ENCODE measurements at regions of chr17 and their contacts with region 1.

Region 1: GRCh38 chr17:66541461-66542128 is 239.2 kb downstream of the PRKCA start:
- DNase-seq: peak in 1 of 2 donors; percentile 26
- ATAC-seq: peak in 4 of 8 donors; percentile 37 to 62 (median 48)
- H3K4me3 ChIP-seq: no peak overlapping the region
- H3K27ac ChIP-seq: peak overlapping the region in 7 of 10 donors; percentile 1 to 61 (median 41)
- H3K4me1 ChIP-seq: peaks cover 5 to 40% (median 20%) of the 10 kb centered on the region in 9 donors
- H3K27me3 ChIP-seq: no peaks in the 10 kb centered on the region
- CTCF ChIP-seq: no peak

Region 2: DNA sequence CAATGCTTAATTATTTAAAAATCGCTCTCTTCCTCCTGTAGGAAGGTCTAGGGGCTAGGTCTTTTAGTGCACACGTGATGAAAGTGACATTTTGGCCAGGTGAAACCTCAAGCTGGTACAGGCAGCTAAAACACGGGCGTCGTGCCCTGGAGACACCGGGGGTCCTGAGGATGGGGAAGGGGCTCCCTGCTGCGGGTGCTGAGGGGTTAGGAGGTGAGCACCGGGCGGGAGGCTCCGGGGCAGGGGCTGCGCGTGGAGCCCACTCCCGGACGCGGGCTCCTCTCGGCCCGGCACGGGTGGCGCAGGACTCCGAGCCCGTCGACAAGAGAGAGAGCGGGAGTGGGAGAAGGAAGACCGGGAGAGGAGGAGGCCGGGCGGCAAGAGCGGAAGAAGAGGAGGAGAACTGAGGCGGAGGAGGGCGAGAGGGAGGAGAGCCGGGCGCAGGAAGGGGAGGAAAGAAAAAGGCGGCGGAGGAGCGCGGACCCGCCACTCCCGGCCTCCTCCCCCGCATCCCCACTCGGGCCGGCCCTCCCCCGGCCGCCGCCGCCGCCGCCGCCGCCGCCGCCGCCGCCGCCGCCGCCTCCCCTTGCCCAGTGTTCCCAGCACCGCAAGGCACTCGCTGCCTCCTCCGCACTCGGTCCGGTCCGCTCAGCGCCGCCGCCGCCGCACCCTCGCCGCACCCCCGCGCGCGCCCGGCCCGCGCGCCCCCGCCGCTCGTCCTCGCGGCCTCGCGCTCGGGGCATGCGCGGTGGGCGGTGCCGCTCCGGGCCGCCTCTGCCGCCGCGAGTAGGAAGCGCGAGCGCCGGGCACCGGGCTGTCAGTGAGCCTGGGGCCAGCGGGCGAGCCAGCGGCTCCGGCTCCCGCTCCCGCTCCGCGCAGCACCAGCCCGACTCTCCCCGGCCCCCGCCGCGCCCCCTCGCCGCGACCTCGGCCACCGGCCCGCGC is 239.5 kb before region 1 on chr17 and contains the start of gene PRKCA:
- intact Hi-C with region 1: loop called in 1 of 10 experiments (anchors 5 kb)
- DNase-seq: peak; percentile 59 to 81
- ATAC-seq: peak; percentile 67 to 93 (median 88)
- H3K4me3 ChIP-seq: peak within 1 kb of the TSS; percentile 72 to 97 (median 81)
- H3K27ac ChIP-seq: peak within 1 kb of the TSS; percentile 51 to 87 (median 75)
- H3K4me1 ChIP-seq: peaks cover 0 to 40% (median 17%) of the 10 kb centered on the region in 9 donors
- H3K27me3 ChIP-seq: peaks cover 0 to 22% (median 0%) of the 10 kb centered on the region in 7 donors
- CTCF ChIP-seq: no peak
- total RNA-seq, gene PRKCA: 4.5 to 27.6 (median 13.7) TPM

Region 3: DNA sequence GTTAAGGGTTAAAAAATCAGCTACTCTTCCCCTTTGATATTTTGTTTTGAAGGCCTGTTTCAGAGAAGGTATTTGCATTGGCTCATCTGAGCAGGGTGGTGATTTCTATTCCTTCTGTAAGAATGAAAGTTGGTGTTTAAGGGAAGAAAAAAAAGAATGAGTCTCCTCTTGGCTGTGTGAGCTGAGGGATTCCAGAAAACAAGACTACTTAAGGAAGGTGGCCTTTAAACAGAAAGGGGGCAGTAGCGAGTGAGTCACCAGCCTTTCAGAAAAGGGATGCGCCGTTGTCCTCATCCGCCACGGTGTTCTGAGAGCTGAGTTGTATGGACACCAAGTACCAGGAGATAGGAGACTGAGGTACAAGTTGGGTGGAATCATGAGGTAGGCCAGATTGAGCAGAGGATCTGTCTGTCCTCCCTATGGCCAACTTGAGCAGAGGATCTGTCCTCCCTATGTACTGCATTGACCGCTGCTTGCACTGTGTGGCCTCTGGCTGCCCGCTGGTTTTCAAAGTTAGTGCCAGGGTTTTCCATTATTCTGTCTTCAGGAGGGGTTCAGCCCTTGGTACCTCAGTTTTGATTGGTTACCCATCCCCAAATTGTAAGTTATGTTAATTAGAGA is 231.0 kb before region 1 on chr17:
- intact Hi-C with region 1: loop called in 1 of 10 experiments (anchors 10 kb)
- DNase-seq: no peak
- ATAC-seq: no peak
- H3K4me3 ChIP-seq: no peak overlapping the region
- H3K27ac ChIP-seq: no peak overlapping the region
- H3K4me1 ChIP-seq: peaks cover 0 to 6% (median 0%) of the 10 kb centered on the region in 9 donors
- H3K27me3 ChIP-seq: no peaks in the 10 kb centered on the region
- CTCF ChIP-seq: no peak